ENCODE measurements at regions of chr15 and their contacts with region 1.

Region 1: GRCh38 chr15:57340682-57341259 is 35.5 kb upstream of the CGNL1 start:
- DNase-seq: peak in 1 of 2 donors; percentile 54
- ATAC-seq: peak in 7 of 8 donors; percentile 37 to 58 (median 51)
- H3K4me3 ChIP-seq: no peak overlapping the region
- H3K27ac ChIP-seq: no peak overlapping the region
- H3K4me1 ChIP-seq: peaks cover 0 to 34% (median 13%) of the 10 kb centered on the region in 9 donors
- H3K27me3 ChIP-seq: no peaks in the 10 kb centered on the region
- CTCF ChIP-seq: peak; percentile 74 to 94 (median 89)

Region 2: GRCh38 chr15:57462381-57462780 is 121.6 kb after region 1 on chr15:
- intact Hi-C with region 1: loop called in 1 of 10 experiments (anchors 5 kb)
- DNase-seq: no peak
- ATAC-seq: no peak
- H3K4me3 ChIP-seq: no peak overlapping the region
- H3K27ac ChIP-seq: no peak overlapping the region
- H3K4me1 ChIP-seq: peaks cover 0 to 17% (median 6%) of the 10 kb centered on the region in 9 donors
- H3K27me3 ChIP-seq: peaks cover 0 to 3% (median 0%) of the 10 kb centered on the region in 7 donors
- CTCF ChIP-seq: peak in 6 of 9 donors; percentile 15 to 46 (median 32)

Region 3: DNA sequence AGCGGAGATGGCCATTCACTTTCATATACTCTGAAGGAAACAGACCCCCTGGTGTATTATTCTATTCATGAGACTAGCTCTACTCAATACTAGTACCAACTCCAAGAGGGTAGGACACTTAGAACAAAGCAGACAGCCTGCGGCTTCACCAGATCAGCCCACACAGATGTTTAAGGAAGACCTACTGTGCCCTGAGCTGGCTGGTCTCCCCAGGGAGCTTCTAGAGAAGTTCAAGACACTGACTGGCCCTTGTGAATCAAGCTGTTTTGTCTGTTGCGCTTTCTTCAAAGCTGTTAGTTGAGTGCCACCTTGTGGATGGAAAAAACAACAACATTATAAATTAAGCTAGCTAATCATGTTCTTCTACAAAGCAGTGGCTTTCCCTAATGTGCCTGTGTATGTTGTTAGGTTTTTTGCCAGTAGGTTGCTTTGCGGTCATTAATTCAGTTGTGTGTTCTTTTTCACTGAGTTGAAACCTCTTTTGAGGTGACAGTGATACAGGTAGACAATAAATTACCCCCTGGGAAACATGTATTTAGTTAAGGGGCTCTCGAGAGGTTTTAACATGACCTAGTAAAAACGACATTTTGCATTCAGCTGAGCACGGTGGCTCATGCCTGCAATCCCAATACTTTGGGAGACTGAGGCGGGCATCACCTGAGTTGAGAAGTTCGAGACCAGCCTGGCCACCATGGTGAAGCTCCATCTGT is 186.8 kb after region 1 on chr15:
- intact Hi-C with region 1: loop called (anchors 1 to 2 kb)
- DNase-seq: peak in 1 of 2 donors; percentile 58
- ATAC-seq: peak; percentile 62 to 78 (median 71)
- H3K4me3 ChIP-seq: no peak overlapping the region
- H3K27ac ChIP-seq: no peak overlapping the region
- H3K4me1 ChIP-seq: peaks cover 0 to 18% (median 3%) of the 10 kb centered on the region in 9 donors
- H3K27me3 ChIP-seq: no peaks in the 10 kb centered on the region
- CTCF ChIP-seq: peak; percentile 49 to 81 (median 66)

Measured in heart right ventricle (tissue), 16 donors.